ENCODE measurements at regions of chr9 and their contacts with region 1.

Region 1: GRCh38 chr9:6703898-6704639 is 53.7 kb upstream of the KDM4C start:
- DNase-seq: peak; percentile 72 to 94 (median 81)
- ATAC-seq: peak; percentile 85
- H3K4me3 ChIP-seq: peak overlapping the region; percentile 67
- H3K4me3 Mint-ChIP-seq: peak overlapping the region; percentile 92
- H3K27ac ChIP-seq: peak overlapping the region; percentile 90 to 92
- H3K27ac Mint-ChIP-seq: peak overlapping the region; percentile 91
- H3K4me1 ChIP-seq: peaks cover 16% of the 10 kb centered on the region
- H3K4me1 Mint-ChIP-seq: peaks cover 18% of the 10 kb centered on the region
- H3K27me3 ChIP-seq: no peaks in the 10 kb centered on the region
- H3K27me3 Mint-ChIP-seq: no peaks in the 10 kb centered on the region
- CTCF ChIP-seq: no peak

Region 2: DNA sequence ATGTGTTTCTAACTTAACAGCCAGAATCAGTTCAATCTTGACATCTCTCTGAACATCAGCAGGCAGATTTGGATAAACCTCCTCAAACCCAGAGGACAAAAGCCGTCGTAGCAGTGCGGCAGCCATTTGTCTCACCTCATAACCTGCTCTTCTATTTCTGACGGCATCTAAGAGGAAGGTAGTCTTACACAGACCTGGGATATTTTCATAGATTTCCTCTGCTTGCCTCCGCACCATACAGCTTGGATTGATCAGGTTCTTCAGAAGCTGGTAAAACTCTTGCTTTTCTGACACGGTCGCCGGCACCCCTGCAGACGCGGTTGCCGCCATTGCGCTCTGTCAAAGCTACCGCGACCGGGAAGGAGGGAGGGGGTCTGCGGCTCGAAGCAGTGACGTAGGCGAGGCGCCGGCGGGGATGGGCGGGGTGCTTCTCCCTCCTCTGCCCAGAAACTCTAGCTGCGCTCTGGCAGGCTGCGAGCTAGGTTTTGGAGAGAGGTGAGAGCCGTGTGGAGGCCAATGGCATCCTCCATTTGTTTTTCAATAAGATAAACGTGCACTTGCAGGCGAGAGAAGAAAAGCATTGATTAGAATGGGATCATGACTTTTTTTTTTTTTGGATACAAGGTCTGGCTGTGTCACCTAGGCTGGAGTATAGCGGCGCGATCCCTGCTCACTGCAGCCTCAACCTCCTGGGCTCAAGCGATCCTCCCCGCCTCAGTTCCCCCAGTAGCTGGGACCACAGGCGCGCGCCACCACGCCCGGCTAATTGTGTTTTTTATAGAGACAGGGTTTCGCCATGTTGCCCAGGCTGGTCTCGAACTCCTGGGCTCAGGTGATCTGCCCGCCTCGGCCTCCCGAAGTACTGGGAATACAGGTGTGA is 688.6 kb before region 1 on chr9 and contains the start of gene RANBP6:
- CTCF ChIA-PET with region 1: no interaction called
- POLR2A ChIA-PET with region 1: no interaction called
- intact Hi-C with region 1: loop called in 1 of 2 experiments (anchors 5 kb)
- DNase-seq: peak; percentile 82 to 95 (median 89)
- ATAC-seq: peak; percentile 98
- H3K4me3 ChIP-seq: peak within 1 kb of the TSS; percentile 86
- H3K4me3 Mint-ChIP-seq: peak within 1 kb of the TSS; percentile 94
- H3K27ac ChIP-seq: peak within 1 kb of the TSS; percentile 72 to 83
- H3K27ac Mint-ChIP-seq: peak within 1 kb of the TSS; percentile 97
- H3K4me1 ChIP-seq: peaks cover 18% of the 10 kb centered on the region
- H3K4me1 Mint-ChIP-seq: peaks cover 41% of the 10 kb centered on the region
- H3K27me3 ChIP-seq: no peaks in the 10 kb centered on the region
- H3K27me3 Mint-ChIP-seq: no peaks in the 10 kb centered on the region
- CTCF ChIP-seq: no peak
- total RNA-seq, gene RANBP6: 36.7 to 40.6 TPM

Region 3: DNA sequence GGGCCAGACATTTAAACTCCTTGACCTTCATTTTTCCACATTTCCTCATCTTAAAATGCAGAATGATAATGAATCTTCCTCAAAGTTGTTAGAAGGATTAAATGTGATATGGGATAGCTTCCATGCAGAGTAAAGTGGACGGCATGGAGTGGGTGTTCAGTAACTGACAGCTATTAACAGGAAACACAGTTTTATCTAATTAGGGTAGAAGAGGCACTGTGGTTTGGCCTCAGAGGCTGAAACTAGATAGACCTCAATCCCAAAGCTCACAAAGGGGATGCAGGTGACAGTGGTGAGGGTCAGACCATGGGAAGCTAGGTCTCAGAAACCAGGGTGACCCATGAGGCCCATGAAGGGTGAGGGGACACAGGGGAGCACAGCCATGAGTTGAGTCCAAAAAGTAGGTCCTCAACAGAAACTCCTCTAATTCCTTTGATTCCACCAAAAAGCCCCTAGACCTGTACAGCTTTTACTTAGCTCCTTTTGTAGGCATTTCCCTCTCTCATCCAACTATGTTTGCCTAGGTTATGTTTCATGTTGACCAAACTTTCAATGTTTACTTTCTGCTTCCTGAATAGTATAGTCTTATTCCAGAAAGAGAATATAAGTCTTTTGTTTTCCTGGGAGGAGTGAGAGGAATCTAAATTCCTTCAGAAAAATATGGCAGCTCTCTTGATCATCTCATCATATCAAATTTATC is 30.6 kb before region 1 on chr9:
- CTCF ChIA-PET with region 1: no interaction called
- POLR2A ChIA-PET with region 1: no interaction called
- intact Hi-C with region 1: loop called in 1 of 2 experiments (anchors 5 kb)
- DNase-seq: no peak
- ATAC-seq: no peak
- H3K4me3 ChIP-seq: no peak overlapping the region
- H3K4me3 Mint-ChIP-seq: no peak overlapping the region
- H3K27ac ChIP-seq: no peak overlapping the region
- H3K27ac Mint-ChIP-seq: no peak overlapping the region
- H3K4me1 ChIP-seq: no peaks in the 10 kb centered on the region
- H3K4me1 Mint-ChIP-seq: no peaks in the 10 kb centered on the region
- H3K27me3 ChIP-seq: no peaks in the 10 kb centered on the region
- H3K27me3 Mint-ChIP-seq: no peaks in the 10 kb centered on the region
- CTCF ChIP-seq: no peak

Region 4: DNA sequence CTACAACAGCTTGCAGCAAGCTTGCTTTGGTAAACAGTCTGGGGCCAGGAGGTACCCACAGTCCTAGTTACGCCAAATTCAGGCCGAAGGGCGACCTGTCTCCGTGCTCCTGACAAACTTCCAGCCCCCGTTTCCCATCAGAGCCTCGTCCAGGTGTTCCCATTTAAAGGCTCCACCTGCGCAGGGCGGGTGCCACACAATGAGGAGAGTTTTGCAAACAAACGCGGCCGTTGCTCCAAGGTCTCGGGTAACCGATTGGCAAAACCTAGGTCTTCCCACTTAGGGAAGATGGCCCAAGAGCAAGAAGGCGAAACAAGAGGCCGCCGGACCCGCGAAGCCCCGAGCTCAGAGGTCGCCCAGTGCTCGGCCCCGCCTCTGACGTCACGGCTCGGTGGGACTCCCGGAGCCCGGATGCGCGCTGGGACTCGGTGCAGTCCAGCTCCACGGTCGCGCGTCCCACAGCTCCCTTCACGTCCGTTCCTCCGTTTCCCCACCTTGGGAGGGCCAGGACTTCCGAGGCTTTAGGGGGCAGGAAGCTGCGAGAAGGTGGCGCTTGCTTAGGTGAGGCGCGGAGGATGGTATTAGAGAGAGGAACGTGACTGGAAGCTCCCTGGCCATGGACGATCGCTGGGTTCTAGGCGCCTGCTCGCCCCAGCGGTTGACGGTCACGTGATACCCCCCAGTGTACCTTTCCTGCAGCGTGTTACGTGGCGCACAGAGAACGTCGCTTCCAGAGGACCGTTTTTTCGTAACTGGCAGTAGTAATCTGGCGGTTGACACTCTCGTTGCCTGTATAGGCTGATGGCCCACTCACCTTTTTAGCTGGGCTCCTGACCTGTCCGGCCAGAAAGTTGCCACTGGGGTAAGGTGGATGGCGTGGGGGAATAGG is 11.9 kb after region 1 on chr9:
- CTCF ChIA-PET with region 1: no interaction called
- POLR2A ChIA-PET with region 1: interaction called, 24 read pairs
- intact Hi-C with region 1: no loop called
- DNase-seq: peak; percentile 40 to 83 (median 56)
- ATAC-seq: peak; percentile 88
- H3K4me3 ChIP-seq: peak overlapping the region; percentile 72
- H3K4me3 Mint-ChIP-seq: peak overlapping the region; percentile 92
- H3K27ac ChIP-seq: peak overlapping the region in 1 of 2 donors; percentile 50
- H3K27ac Mint-ChIP-seq: peak overlapping the region; percentile 87
- H3K4me1 ChIP-seq: peaks cover 17% of the 10 kb centered on the region
- H3K4me1 Mint-ChIP-seq: peaks cover 6% of the 10 kb centered on the region
- H3K27me3 ChIP-seq: no peaks in the 10 kb centered on the region
- H3K27me3 Mint-ChIP-seq: no peaks in the 10 kb centered on the region
- CTCF ChIP-seq: no peak

Measured in CD4-positive, alpha-beta T cell (primary cell).